GM12878 (cell line): ENCODE measurements at regions of chr7 and their contacts with region 1.

Region 1: DNA sequence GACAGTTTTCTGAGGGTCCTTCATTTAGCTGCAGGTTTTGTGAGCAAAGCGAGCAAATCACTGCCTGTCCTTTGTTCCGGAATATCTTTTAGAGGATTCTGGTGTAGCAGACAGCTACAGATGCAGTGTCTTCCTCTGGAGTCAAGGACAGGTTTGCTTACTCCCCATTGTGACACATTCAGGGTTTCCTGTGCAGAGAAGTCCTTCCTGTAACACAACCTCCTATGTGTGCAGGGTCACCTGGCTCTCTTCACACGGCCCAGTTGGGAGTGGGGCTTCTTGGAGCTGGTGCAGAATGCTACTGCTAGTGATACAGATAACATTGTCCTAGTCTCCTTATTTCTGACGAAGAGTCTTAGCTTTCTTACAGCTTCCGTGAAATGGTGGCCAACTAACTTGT is 47.9 kb downstream of the RBM33 start:
- DNase-seq: no peak
- ATAC-seq: peak; percentile 67
- H3K4me3 ChIP-seq: no peak overlapping the region
- H3K27ac ChIP-seq: no peak overlapping the region
- H3K4me1 ChIP-seq: peaks cover 8% of the 10 kb centered on the region; the same call in 1 of the 2 replicates
- H3K27me3 ChIP-seq: no peaks in the 10 kb centered on the region
- CTCF ChIP-seq: no peak
- EP300 ChIP-seq: no peak
- POLR2A ChIP-seq: no peak
- RAD21 ChIP-seq: no peak

Region 2: GRCh38 chr7:155702616-155703015 is 10.3 kb after region 1 on chr7:
- CTCF ChIA-PET with region 1: interaction called, 7 read pairs
- POLR2A ChIA-PET with region 1: interaction called, 5 read pairs
- RAD21 ChIA-PET with region 1: interaction called, 4 read pairs
- SMC1A ChIA-PET with region 1: interaction called, 17 read pairs
- in situ Hi-C with region 1: no loop called
- intact Hi-C with region 1: no loop called
- DNase-seq: no peak
- ATAC-seq: no peak
- H3K4me3 ChIP-seq: no peak overlapping the region
- H3K27ac ChIP-seq: no peak overlapping the region
- H3K4me1 ChIP-seq: no peaks in the 10 kb centered on the region
- H3K27me3 ChIP-seq: no peaks in the 10 kb centered on the region
- CTCF ChIP-seq: no peak
- EP300 ChIP-seq: no peak
- POLR2A ChIP-seq: no peak
- RAD21 ChIP-seq: no peak